Activated CD4-positive, alpha-beta T cell treated with anti-CD3 and anti-CD28 coated beads for 36 hours (primary cell): ENCODE measurements at regions of chr16 and their contacts with region 1.

Region 1: DNA sequence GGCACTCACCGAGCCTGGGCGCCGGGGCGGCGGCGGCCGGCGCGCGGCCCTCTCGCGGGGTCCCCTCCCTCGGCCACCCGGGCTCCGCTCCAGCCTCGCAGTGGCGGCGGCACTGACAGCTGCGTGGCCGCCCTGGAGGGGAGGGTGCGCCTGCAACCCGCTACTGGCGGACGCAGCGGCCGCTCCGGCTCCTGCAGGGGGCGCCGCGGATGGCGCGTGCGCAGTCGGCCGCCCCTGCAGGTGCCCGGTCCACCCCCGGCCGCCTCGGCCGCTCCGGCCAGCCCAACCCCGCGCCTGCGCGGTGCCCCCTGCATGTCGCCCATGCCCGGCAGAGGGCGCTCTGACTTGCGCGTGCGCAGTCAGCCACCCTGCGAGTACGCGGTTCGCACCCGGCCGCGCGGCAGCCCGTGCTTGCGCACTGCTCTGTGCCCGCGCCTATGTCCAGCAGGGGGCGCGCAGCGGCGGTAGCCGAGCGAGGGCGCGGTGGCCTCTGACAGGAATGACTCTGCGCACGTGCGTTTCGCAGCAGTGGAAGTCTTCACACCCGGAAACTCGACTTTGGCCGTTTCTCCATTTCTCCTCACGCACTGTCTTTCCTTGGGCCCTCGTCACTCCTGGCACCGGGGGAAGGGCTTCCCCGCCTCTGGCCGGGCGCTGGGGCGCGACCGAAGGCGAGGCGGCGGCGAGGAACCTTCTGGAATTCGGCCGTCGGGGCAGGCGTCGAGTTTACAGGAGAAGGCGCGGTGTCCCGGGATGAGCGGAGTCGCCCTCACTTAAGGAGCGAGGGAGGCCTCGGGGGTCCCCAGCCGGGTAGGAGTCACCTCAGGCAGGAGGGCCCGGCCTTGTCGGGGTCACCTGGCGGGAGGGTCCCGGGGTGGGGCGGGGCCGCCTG is at the start of gene ABCA3:
- DNase-seq: peak; percentile 97
- ATAC-seq: peak; percentile 92
- H3K4me3 Mint-ChIP-seq: peak within 1 kb of the TSS; percentile 82
- H3K27ac Mint-ChIP-seq: peak within 1 kb of the TSS; percentile 21
- H3K4me1 Mint-ChIP-seq: peaks cover 13% of the 10 kb centered on the region
- H3K27me3 Mint-ChIP-seq: peaks cover 7% of the 10 kb centered on the region
- total RNA-seq, gene ABCA3: 6.0 to 7.2 TPM

Region 2: GRCh38 chr16:1677802-1678496 is 662.9 kb before region 1 on chr16 and contains the start of gene JPT2:
- CTCF ChIA-PET with region 1: no interaction called
- POLR2A ChIA-PET with region 1: no interaction called
- intact Hi-C with region 1: loop called in 1 of 2 experiments (anchors 1 kb)
- DNase-seq: peak; percentile 98
- ATAC-seq: peak; percentile 99
- H3K4me3 Mint-ChIP-seq: peak within 1 kb of the TSS; percentile 94
- H3K27ac Mint-ChIP-seq: peak within 1 kb of the TSS; percentile 89
- H3K4me1 Mint-ChIP-seq: peaks cover 26% of the 10 kb centered on the region
- H3K27me3 Mint-ChIP-seq: no peaks in the 10 kb centered on the region
- total RNA-seq, gene JPT2: 77.1 to 111 TPM

Region 3: DNA sequence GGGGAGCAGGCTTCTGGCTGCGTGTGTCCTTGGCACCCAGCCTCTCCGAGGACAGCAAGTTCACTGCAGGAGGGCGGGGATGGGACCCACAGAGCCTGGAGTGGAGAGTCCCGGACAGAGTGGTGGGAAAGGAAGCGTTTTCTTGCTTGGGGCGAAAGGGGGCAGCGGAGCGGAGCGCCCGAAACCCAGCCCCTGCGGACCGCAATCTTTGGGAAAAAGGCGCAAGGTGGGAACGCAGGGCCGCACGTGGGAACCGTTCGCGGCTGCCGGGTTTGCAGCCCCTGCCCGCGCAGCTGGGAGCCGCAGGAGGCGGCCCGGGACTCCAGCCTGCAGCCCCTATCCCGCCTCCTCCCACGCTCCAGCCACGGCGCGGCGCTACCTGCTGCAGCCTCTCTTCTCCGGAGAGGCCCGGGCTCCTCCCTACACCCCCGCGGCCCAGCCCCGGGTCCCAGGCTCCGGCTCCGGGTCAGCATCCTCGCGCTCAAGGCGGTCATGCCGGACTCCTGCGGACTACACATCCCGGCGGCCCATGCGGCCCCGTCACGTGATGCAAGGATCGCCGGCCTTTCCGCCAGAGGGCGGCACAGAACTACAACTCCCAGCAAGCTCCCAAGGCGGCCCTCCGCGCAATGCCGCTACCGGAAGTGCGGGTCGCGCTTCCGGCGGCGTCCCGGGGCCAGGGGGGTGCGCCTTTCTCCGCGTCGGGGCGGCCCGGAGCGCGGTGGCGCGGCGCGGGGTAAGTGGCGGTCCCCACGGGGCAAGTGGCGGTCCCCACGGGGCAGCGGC is 293.3 kb before region 1 on chr16 and contains the starts of genes NTHL1 and TSC2:
- CTCF ChIA-PET with region 1: no interaction called
- POLR2A ChIA-PET with region 1: no interaction called
- intact Hi-C with region 1: loop called in 1 of 2 experiments (anchors 1 kb)
- DNase-seq: peak; percentile 97
- ATAC-seq: peak; percentile 97
- H3K4me3 Mint-ChIP-seq: peak within 1 kb of the TSS; percentile 89
- H3K27ac Mint-ChIP-seq: peak within 1 kb of the TSS; percentile 85
- H3K4me1 Mint-ChIP-seq: peaks cover 18% of the 10 kb centered on the region
- H3K27me3 Mint-ChIP-seq: no peaks in the 10 kb centered on the region
- total RNA-seq, gene NTHL1: 22.6 to 26.1 TPM
- total RNA-seq, gene TSC2: 49.6 to 72.9 TPM

Region 4: DNA sequence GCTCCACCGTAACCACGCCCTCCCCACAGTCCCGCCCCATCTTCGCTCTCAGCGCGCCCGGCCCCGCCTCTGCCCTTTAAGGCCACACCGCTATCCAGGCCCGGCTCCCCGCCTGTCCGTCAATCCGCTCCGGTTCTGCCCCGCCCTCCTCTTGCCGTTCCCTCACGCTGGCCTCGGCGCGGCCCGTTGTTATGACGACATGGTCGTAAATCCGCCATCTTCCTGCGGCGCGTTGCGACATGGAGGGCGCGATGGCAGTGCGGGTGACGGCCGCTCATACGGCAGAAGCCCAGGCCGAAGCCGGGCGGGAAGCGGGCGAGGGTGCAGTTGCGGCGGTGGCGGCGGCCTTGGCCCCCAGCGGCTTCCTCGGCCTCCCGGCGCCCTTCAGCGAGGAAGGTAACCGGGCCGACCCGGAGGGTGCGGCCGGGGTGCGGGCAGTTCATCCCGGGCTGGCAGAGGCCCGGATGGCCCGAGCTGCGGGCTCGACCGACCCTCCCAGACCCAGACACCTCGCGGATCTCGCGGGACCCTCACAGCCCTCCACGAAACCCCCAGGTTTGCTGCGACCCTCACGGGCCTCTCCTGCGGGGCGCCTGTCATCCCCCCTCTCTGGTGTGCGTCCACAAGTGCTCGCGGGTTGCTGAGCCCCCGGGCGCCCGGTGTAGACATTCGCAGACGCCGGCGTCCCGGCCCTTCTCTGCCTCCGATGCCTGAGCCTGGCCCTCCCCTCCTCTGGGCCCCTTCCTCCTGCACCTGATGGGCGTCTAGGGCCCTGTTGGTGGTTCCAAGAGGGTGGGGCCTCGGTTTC is 117.2 kb before region 1 on chr16 and contains the start of gene E4F1:
- CTCF ChIA-PET with region 1: no interaction called
- POLR2A ChIA-PET with region 1: no interaction called
- intact Hi-C with region 1: loop called in 1 of 2 experiments (anchors 2 kb)
- DNase-seq: peak; percentile 100
- ATAC-seq: peak; percentile 99
- H3K4me3 Mint-ChIP-seq: peak within 1 kb of the TSS; percentile 78
- H3K27ac Mint-ChIP-seq: peak within 1 kb of the TSS; percentile 13
- H3K4me1 Mint-ChIP-seq: peaks cover 15% of the 10 kb centered on the region
- H3K27me3 Mint-ChIP-seq: no peaks in the 10 kb centered on the region
- total RNA-seq, gene E4F1: 18.0 to 18.6 TPM

Region 5: GRCh38 chr16:2257726-2258125 is 83.1 kb before region 1 on chr16:
- CTCF ChIA-PET with region 1: no interaction called
- POLR2A ChIA-PET with region 1: no interaction called
- intact Hi-C with region 1: no loop called
- DNase-seq: no peak
- ATAC-seq: no peak
- H3K4me3 Mint-ChIP-seq: no peak overlapping the region
- H3K27ac Mint-ChIP-seq: peak overlapping the region; percentile 19
- H3K4me1 Mint-ChIP-seq: no peaks in the 10 kb centered on the region
- H3K27me3 Mint-ChIP-seq: no peaks in the 10 kb centered on the region

Region 6: GRCh38 chr16:2474877-2475412 is 134.1 kb after region 1 on chr16 and contains the start of gene TBC1D24:
- CTCF ChIA-PET with region 1: no interaction called
- POLR2A ChIA-PET with region 1: no interaction called
- intact Hi-C with region 1: loop called in 1 of 2 experiments (anchors 1 kb)
- DNase-seq: peak; percentile 89
- ATAC-seq: peak; percentile 71
- H3K4me3 Mint-ChIP-seq: peak within 1 kb of the TSS; percentile 71
- H3K27ac Mint-ChIP-seq: peak within 1 kb of the TSS; percentile 69
- H3K4me1 Mint-ChIP-seq: peaks cover 6% of the 10 kb centered on the region
- H3K27me3 Mint-ChIP-seq: peaks cover 16% of the 10 kb centered on the region
- total RNA-seq, gene TBC1D24: 10.4 to 12.7 TPM

Region 7: DNA sequence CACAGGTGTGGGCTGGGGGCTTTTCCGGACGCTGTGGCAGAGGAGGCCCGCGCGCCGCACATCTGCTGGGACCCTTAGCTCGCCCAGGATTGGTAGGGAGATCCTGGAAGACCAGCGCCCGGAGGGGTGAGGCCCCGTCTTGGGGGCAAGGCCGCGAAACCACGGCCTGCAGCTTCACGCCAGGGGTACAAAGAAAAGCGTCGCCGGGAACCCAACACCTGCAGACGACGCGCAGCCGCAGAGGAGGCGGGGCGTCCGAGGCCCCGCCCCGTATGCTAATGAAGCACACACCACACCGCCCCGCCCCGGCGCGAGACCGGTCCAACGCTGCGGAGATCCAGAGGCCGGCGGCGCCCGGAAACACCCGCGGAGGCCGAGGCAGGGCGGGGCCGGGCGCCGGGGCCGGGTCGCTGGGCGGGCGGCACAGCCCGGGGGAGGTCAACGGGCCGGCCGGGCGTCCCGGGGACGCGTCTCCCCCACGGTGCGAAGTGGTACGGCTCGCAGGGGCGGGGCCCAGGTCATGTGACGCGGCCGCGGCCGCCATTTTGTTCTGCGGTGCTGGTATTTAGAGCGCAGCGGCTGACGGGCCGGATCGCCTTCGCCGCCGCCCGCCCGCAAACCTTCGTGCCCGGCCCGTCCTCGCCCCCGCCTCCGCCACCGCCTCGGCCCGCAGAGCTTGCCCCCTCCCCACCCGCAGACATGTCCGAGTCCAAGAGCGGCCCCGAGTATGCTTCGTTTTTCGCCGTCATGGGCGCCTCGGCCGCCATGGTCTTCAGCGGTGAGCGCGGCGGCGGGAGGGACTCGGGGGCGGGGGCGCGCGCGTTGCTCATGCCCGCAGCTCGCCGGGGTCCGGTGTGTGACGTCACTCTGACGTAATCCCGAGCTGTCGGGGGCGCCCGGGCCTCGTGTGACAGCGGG is 172.9 kb after region 1 on chr16 and contains the start of gene ATP6V0C:
- CTCF ChIA-PET with region 1: no interaction called
- POLR2A ChIA-PET with region 1: no interaction called
- intact Hi-C with region 1: loop called in 1 of 2 experiments (anchors 1 kb)
- DNase-seq: peak; percentile 95
- ATAC-seq: peak; percentile 90
- H3K4me3 Mint-ChIP-seq: peak within 1 kb of the TSS; percentile 93
- H3K27ac Mint-ChIP-seq: peak within 1 kb of the TSS; percentile 95
- H3K4me1 Mint-ChIP-seq: peaks cover 44% of the 10 kb centered on the region
- H3K27me3 Mint-ChIP-seq: no peaks in the 10 kb centered on the region
- total RNA-seq, gene ATP6V0C: 91.7 to 130 TPM